ENCODE measurements at regions of chr11 and their contacts with region 1.

Region 1: GRCh38 chr11:59263225-59263894 is 50.6 kb upstream of the MPEG1 start:
- DNase-seq: peak; percentile 35 to 68 (median 53)
- ATAC-seq: no peak
- H3K4me3 ChIP-seq: no peak overlapping the region
- H3K27ac ChIP-seq: no peak overlapping the region
- H3K4me1 ChIP-seq: no peaks in the 10 kb centered on the region
- H3K27me3 ChIP-seq: no peaks in the 10 kb centered on the region
- CTCF ChIP-seq: peak; percentile 27 to 67 (median 50)
- POLR2A ChIP-seq: no peak

Region 2: DNA sequence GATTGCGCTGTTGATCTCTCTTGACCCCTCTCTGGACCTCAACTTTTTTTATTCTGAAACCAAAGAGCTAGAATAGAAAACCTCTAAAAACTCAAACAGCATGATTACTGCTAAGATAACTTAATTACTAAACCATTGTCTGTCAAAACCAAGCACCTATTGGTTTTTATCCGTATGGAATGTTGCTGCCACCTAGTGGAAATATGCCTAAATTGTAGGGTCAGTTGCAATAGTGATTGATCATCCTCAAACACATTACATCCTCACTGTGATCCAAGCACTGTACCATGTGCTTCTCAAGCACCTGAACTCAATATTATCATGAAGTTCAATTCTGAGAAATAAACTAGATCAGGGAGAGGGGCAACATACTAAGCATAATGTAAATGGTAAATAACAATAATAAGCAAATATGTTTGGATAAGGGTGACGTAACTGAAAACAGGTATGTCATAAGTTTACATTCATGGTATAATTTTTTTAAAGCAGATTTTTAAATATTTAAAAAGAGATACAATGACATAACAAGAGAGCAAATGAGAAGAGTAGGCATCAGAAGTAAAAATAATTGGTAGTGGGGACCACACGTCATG is 166.7 kb after region 1 on chr11:
- intact Hi-C with region 1: loop called (anchors 10 kb)
- DNase-seq: peak; percentile 27 to 66 (median 35)
- ATAC-seq: no peak
- H3K4me3 ChIP-seq: no peak overlapping the region
- H3K27ac ChIP-seq: no peak overlapping the region
- H3K4me1 ChIP-seq: no peaks in the 10 kb centered on the region
- H3K27me3 ChIP-seq: no peaks in the 10 kb centered on the region
- CTCF ChIP-seq: peak; percentile 58 to 90 (median 82)
- POLR2A ChIP-seq: no peak